MCF 10A (cell line): ENCODE measurements at regions of chr3 and their contacts with region 1.

Region 1: DNA sequence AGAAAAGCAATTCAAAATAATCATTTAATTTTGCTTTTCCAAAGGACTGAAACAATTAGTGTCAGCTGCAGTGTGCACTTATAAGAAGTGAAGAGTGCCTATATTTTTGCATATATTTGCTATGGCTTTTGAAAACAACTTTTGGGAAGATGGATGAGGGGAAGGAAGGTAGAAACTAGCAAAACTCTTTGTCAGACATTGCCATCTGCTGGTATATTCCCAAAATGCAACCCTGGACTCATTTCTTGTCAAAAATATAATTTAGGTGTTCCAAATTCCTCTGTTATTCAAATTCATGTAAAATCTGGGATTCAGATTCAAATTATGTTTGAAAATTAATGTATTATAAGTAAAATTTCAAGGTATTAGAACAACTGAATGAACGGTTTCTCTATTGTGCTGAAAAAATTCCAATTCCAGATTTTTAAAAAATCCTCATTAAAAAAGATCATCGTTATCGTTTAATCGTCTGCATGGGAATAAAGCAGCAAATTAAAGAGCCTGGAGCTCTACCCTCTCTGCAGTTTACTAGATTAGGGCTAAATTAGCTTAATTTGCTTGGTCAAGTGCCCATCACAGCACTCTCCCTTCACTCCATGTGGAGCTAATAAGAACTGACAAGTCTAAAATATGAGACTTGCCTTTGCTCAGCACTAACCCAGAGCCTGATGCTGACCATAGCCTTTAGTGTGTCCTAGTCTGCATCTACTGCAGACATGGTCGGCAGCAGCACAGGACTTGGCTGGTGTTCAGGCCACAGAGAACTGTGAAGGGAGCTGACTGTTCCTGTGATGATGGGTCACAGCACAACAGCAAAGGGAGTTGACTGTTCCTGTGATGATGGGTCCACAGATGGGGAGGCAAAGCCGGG is 67.9 kb upstream of the MITF start:
- DNase-seq: peak; percentile 67
- H3K4me3 Mint-ChIP-seq: no peak overlapping the region
- H3K27ac Mint-ChIP-seq: no peak overlapping the region
- H3K4me1 Mint-ChIP-seq: peaks cover 14% of the 10 kb centered on the region
- H3K27me3 Mint-ChIP-seq: no peaks in the 10 kb centered on the region
- CTCF ChIP-seq: peak; percentile 70

Region 2: DNA sequence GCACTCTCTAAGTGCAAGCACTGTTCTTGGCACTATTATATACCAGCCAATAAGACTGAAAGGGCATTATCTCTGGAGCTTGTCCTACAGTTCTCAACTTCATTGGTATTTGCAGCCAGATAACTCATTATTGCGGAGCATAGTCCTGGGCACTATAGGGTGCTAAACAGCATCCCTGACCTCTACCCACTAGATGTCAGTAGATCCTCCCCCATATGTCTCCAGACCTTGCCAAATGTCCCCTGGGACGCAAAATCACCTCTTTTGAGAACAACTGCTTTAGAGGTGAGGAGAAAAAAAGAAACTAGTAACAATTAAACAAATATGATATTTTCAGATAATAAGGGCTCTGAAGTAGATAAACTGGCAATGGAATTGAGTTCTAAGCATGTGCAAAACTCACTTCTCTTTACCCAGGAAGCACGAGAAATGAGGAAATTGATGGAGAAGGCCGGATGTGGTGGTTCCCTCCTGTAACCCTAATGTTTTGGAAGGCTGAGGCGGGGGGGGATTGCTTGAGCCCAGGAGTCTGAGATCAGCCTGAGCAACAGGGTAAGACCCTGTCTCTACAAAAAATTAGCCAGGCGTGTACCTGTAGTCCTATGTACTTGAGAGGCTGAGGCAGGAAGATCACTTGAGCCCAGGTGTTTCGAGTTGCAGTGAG is 346.8 kb before region 1 on chr3:
- CTCF ChIA-PET with region 1: interaction called, 7 read pairs
- POLR2A ChIA-PET with region 1: no interaction called
- intact Hi-C with region 1: loop called (anchors 1 kb)
- DNase-seq: peak; percentile 51
- H3K4me3 Mint-ChIP-seq: no peak overlapping the region
- H3K27ac Mint-ChIP-seq: no peak overlapping the region
- H3K4me1 Mint-ChIP-seq: peaks cover 11% of the 10 kb centered on the region
- H3K27me3 Mint-ChIP-seq: no peaks in the 10 kb centered on the region
- CTCF ChIP-seq: peak; percentile 53

Region 3: DNA sequence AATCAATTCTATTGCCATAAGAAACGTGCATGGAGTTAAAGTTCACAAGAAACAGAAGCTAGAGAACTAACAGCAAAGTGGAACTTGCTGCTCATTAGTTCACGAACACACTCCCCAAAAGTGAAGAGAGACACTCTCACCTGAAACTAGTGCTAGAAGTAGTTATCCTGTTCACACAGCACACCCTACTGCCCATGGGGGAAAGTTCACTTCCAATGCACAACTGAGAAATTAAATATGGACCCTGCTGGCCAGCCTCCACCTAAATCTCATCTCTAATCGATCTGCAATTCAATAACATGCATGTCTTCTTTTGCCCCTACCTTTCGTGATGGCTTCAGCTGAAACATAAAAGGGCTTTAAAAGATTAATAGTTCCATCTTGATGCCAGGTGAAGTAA is 246.1 kb before region 1 on chr3:
- CTCF ChIA-PET with region 1: interaction called, 9 read pairs
- POLR2A ChIA-PET with region 1: no interaction called
- intact Hi-C with region 1: loop called (anchors 5 kb)
- DNase-seq: peak; percentile 62
- H3K4me3 Mint-ChIP-seq: no peak overlapping the region
- H3K27ac Mint-ChIP-seq: no peak overlapping the region
- H3K4me1 Mint-ChIP-seq: peaks cover 18% of the 10 kb centered on the region
- H3K27me3 Mint-ChIP-seq: no peaks in the 10 kb centered on the region
- CTCF ChIP-seq: peak; percentile 74

Region 4: DNA sequence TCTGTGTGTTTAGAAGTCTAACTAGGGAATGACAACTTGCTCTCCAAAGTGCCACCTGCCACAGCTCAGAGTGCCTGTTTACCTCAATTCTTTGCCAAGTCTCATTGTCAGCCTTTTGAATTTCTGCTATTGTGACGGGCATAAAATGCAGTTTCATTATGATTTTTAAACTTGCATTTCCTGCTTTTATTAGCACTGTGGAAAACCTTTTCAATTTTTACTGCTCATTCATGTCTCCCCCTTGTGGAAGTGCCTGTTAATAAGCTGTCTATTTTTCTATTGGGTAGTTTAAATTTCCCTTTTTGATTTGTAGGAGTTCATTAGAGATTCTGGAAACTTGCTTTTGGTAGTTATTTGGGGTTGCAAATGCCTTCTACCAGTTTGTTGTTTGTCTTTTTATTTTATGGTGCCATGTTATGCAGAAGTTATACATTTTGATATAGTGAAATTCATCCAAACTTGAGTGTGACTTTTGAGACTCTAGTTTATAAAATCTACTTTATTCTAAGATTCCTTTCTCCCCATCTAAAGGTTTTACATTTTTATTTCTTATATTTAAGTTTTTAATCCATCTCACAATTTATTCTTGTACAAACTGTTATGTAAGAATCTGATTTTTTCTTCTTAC is 231.6 kb before region 1 on chr3:
- CTCF ChIA-PET with region 1: interaction called, 23 read pairs
- POLR2A ChIA-PET with region 1: no interaction called
- intact Hi-C with region 1: loop called (anchors 1 kb)
- DNase-seq: peak; percentile 35
- H3K4me3 Mint-ChIP-seq: no peak overlapping the region
- H3K27ac Mint-ChIP-seq: no peak overlapping the region
- H3K4me1 Mint-ChIP-seq: peaks cover 10% of the 10 kb centered on the region
- H3K27me3 Mint-ChIP-seq: no peaks in the 10 kb centered on the region
- CTCF ChIP-seq: peak; percentile 43

Region 5: DNA sequence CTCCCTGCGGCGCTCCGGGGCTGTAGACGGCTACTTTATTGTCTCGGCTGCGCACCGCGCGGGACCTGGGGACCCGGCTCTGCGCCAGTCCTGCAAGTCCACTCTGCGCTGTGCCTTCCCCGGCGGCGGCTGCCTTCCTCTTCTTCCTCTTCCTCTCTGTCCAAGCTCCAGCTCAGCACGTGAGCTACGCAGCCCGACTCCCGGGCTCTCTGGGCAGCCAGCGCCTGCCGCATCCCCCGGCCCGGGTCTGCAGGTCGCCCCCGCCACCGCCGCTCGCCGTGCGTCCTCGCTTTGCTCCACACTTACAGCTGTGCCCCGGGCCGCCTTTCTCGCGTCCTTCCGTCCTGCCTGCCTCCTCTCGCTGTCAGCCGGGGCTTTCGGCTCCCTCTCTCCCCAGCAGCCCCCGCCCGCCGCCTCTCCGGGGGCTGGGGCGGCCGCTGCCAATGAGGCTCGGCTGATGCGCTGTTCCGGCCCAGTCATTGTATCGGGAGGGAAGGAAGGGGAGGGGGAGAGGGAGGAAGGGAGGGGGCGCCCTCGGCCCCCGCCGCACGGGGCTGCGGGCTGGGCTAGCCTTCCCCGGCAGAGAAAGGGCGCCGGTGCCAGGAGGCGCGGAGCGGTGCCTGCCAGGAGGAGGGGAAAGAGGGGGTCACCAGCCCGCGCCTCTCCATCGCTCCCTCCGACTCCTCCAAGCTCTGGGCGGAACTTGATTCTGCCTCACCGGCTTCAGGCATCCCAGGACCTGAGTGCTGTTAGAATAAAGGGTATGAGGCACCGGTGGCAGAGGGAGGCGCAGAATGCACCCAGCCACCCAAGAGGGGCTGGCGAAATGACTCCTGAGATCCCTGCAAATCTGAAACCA is 128.9 kb before region 1 on chr3:
- CTCF ChIA-PET with region 1: interaction called, 3 read pairs
- POLR2A ChIA-PET with region 1: interaction called, 4 read pairs
- intact Hi-C with region 1: loop called (anchors 1 kb)
- DNase-seq: peak; percentile 27
- H3K4me3 Mint-ChIP-seq: peak overlapping the region; percentile 78
- H3K27ac Mint-ChIP-seq: peak overlapping the region; percentile 87
- H3K4me1 Mint-ChIP-seq: peaks cover 16% of the 10 kb centered on the region
- H3K27me3 Mint-ChIP-seq: no peaks in the 10 kb centered on the region
- CTCF ChIP-seq: no peak

Region 6: DNA sequence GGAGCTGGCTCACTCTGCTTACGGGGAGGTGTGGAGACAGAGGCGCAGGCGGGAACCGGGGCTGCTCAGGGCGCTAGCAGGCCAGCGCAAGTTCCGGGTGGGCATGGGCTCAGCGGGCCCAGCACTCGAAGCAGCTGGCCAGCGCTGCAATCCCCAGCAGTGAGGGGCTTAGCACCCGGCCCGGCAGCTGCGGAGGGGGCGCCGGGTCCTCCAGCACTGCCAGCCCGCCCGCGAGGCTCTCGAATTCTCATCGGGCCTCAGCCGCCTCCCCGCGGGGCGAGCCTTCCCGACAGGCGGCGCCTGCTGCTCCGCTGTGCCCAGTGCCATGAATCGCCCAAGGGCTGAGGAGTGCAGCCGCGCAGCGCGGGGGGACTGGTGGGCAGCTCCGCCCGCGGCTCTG is 10.7 kb before region 1 on chr3:
- CTCF ChIA-PET with region 1: interaction called, 11 read pairs
- POLR2A ChIA-PET with region 1: no interaction called
- intact Hi-C with region 1: no loop called
- DNase-seq: no peak
- H3K4me3 Mint-ChIP-seq: no peak overlapping the region
- H3K27ac Mint-ChIP-seq: no peak overlapping the region
- H3K4me1 Mint-ChIP-seq: peaks cover 10% of the 10 kb centered on the region
- H3K27me3 Mint-ChIP-seq: no peaks in the 10 kb centered on the region
- CTCF ChIP-seq: no peak

Region 7: GRCh38 chr3:69691860-69692259 is 20.5 kb after region 1 on chr3:
- CTCF ChIA-PET with region 1: interaction called, 10 read pairs
- POLR2A ChIA-PET with region 1: no interaction called
- intact Hi-C with region 1: no loop called
- DNase-seq: no peak
- H3K4me3 Mint-ChIP-seq: no peak overlapping the region
- H3K27ac Mint-ChIP-seq: no peak overlapping the region
- H3K4me1 Mint-ChIP-seq: peaks cover 6% of the 10 kb centered on the region
- H3K27me3 Mint-ChIP-seq: no peaks in the 10 kb centered on the region
- CTCF ChIP-seq: no peak

Region 8: GRCh38 chr3:70028361-70028760 is 357.0 kb after region 1 on chr3:
- CTCF ChIA-PET with region 1: no interaction called
- POLR2A ChIA-PET with region 1: no interaction called
- intact Hi-C with region 1: no loop called
- DNase-seq: no peak
- H3K4me3 Mint-ChIP-seq: no peak overlapping the region
- H3K27ac Mint-ChIP-seq: no peak overlapping the region
- H3K4me1 Mint-ChIP-seq: no peaks in the 10 kb centered on the region
- H3K27me3 Mint-ChIP-seq: peaks cover 82% of the 10 kb centered on the region
- CTCF ChIP-seq: no peak